Body of pancreas (tissue), 4 donors: ENCODE measurements at regions of chr4 and their contacts with region 1.

Region 1: DNA sequence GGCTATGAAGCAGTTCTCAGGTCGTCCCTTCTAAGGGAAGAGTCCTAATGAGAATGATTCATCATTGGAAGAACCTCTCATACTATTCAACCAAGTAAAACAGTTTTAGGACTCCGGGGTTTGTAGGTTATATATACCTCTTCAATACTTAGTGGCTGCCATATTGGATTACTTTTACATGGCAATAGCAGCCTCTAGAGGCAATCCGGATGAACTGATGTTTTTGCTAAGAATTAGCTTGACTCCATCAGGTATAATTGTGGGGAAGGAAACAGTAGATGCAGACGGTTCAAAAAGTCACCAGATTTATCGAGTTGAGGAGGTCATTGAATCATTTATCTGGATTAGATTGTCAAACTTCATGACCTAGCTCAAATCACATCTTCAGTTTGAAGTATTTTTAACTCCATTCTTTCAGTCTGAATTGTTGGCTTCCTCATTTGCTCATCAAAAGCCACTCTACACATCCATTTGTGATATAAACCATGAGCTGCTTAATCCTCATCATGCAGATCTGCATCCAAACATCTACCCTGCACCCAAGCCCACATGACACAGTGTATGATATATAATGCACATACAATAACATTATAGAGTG is 28.4 kb downstream of the GUCY1B1 start:
- DNase-seq: peak in 3 of 4 donors; percentile 25 to 61 (median 36)
- ATAC-seq: peak; percentile 96
- H3K4me3 ChIP-seq: no peak overlapping the region
- H3K27ac ChIP-seq: no peak overlapping the region
- H3K4me1 ChIP-seq: peaks cover 13% of the 10 kb centered on the region
- H3K27me3 ChIP-seq: no peaks in the 10 kb centered on the region
- CTCF ChIP-seq: peak; percentile 22 to 95 (median 95)
- POLR2A ChIP-seq: no peak

Region 2: DNA sequence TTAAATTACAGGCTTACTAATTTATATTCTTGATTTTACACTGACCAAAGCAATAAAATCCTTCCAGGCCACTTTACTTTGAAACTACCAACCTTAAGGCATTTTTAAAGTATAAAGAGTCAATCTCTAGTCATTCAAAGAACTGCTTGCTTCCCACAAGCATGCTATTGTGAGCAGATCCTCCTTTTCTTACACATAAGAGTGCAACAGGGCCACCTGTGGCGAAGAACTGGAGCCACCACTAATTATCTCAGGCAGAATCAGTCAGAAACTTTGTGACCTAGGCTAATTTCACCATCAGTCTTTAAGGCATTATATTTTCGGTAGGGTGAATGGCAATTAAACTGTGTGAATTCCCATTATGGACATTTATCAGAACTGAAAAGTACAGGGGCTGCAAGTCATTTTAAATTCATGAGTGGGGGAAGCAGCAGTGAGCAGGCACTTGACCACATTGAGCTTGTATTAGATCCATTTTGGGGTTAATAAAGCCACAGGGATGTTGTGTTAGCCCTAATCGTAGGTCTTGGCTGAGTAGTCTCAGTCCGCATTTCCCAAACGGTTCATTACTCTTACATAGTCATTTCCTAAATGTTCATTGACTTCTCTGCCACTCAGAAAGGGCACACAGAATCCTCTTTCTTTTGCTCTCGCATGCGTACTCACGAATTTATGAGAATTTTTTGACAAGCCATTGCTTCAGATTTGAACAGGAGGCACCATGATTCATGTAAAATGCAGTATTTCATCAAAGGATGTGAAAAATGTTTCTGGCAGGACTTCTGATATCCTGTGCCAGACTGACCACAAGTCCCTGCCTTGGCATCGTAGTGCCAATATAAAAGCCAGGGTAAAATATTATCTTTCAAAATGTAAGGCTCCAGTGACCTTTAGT is 539.0 kb before region 1 on chr4:
- intact Hi-C with region 1: no loop called
- DNase-seq: no peak
- ATAC-seq: no peak
- H3K4me3 ChIP-seq: no peak overlapping the region
- H3K27ac ChIP-seq: no peak overlapping the region
- H3K4me1 ChIP-seq: no peaks in the 10 kb centered on the region
- H3K27me3 ChIP-seq: no peaks in the 10 kb centered on the region
- CTCF ChIP-seq: no peak
- POLR2A ChIP-seq: no peak

Region 3: GRCh38 chr4:155442267-155443105 is 344.7 kb before region 1 on chr4:
- intact Hi-C with region 1: loop called (anchors 5 kb)
- DNase-seq: peak; percentile 75 to 86 (median 80)
- ATAC-seq: peak; percentile 96
- H3K4me3 ChIP-seq: no peak overlapping the region
- H3K27ac ChIP-seq: no peak overlapping the region
- H3K4me1 ChIP-seq: peaks cover 7% of the 10 kb centered on the region
- H3K27me3 ChIP-seq: no peaks in the 10 kb centered on the region
- CTCF ChIP-seq: peak; percentile 87 to 98 (median 91)
- POLR2A ChIP-seq: no peak

Region 4: GRCh38 chr4:155745984-155746383 is 41.2 kb before region 1 on chr4:
- intact Hi-C with region 1: no loop called
- DNase-seq: peak in 1 of 4 donors; percentile 7
- ATAC-seq: no peak
- H3K4me3 ChIP-seq: no peak overlapping the region
- H3K27ac ChIP-seq: no peak overlapping the region
- H3K4me1 ChIP-seq: no peaks in the 10 kb centered on the region
- H3K27me3 ChIP-seq: no peaks in the 10 kb centered on the region
- CTCF ChIP-seq: no peak
- POLR2A ChIP-seq: no peak